ENCODE measurements at regions of chr15 and their contacts with region 1.

Region 1: GRCh38 chr15:41827880-41828806 is at the start of gene JMJD7:
- DNase-seq: peak; percentile 81 to 98 (median 91)
- ATAC-seq: peak; percentile 99
- H3K4me3 ChIP-seq: peak within 1 kb of the TSS; percentile 99
- H3K4me3 Mint-ChIP-seq: peak within 1 kb of the TSS; percentile 86 to 99 (median 96)
- H3K27ac ChIP-seq: peak within 1 kb of the TSS; percentile 94
- H3K27ac Mint-ChIP-seq: peak within 1 kb of the TSS; percentile 78 to 96 (median 92)
- H3K4me1 ChIP-seq: peaks cover 26 to 38% of the 10 kb centered on the region in 2 donors
- H3K4me1 Mint-ChIP-seq: peaks cover 34 to 53% (median 50%) of the 10 kb centered on the region in 7 donors
- H3K27me3 ChIP-seq: no peaks in the 10 kb centered on the region
- H3K27me3 Mint-ChIP-seq: peaks cover 0 to 3% (median 0%) of the 10 kb centered on the region in 5 donors
- total RNA-seq, gene JMJD7: 25.3 to 83.7 (median 52.1) TPM

Region 2: GRCh38 chr15:41401904-41402267 is 426.3 kb before region 1 on chr15:
- CTCF ChIA-PET with region 1: no interaction called
- POLR2A ChIA-PET with region 1: no interaction called
- intact Hi-C with region 1: loop called in 1 of 2 experiments (anchors 1 kb)
- DNase-seq: no peak
- ATAC-seq: no peak
- H3K4me3 ChIP-seq: peak overlapping the region; percentile 92
- H3K4me3 Mint-ChIP-seq: peak overlapping the region; percentile 87 to 97 (median 96)
- H3K27ac ChIP-seq: peak overlapping the region; percentile 81
- H3K27ac Mint-ChIP-seq: peak overlapping the region; percentile 89 to 96 (median 94)
- H3K4me1 ChIP-seq: peaks cover 0 to 14% of the 10 kb centered on the region in 2 donors
- H3K4me1 Mint-ChIP-seq: peaks cover 0 to 32% (median 24%) of the 10 kb centered on the region in 7 donors
- H3K27me3 ChIP-seq: no peaks in the 10 kb centered on the region
- H3K27me3 Mint-ChIP-seq: no peaks in the 10 kb centered on the region

Region 3: GRCh38 chr15:41870689-41871081 is 42.5 kb after region 1 on chr15:
- CTCF ChIA-PET with region 1: no interaction called
- POLR2A ChIA-PET with region 1: interaction called, 3 read pairs
- intact Hi-C with region 1: loop called in 1 of 2 experiments (anchors 2 kb)
- DNase-seq: peak in 8 of 9 donors; percentile 42 to 69 (median 60)
- ATAC-seq: peak; percentile 91
- H3K4me3 ChIP-seq: no peak overlapping the region
- H3K4me3 Mint-ChIP-seq: peak overlapping the region; percentile 13 to 81 (median 62)
- H3K27ac ChIP-seq: no peak overlapping the region
- H3K27ac Mint-ChIP-seq: peak overlapping the region; percentile 56 to 98 (median 94)
- H3K4me1 ChIP-seq: no peaks in the 10 kb centered on the region
- H3K4me1 Mint-ChIP-seq: peaks cover 7 to 11% (median 8%) of the 10 kb centered on the region in 7 donors
- H3K27me3 ChIP-seq: no peaks in the 10 kb centered on the region
- H3K27me3 Mint-ChIP-seq: no peaks in the 10 kb centered on the region

Region 4: DNA sequence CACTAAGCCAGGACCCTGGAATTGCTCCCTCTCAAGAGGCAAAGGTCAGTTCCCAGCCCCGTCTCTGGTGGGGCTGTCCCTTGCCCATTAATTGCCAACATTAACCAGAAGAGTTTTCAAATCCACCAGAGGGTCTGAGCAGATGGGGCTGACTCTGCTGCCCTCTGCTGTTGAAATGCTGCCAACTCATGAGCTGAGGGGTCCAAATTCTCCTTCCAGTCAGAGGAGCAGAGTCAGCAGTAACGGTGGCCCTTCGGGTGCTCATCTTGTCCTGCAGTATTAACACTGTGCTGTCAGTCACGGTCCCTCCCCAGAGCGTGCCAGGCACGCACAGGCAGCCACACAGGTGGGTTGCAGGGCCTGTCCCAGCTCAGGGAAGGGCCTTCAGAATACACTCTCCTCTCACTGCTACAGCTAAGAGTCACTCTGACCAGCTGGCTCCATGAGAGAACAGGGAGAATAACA is 76.4 kb after region 1 on chr15:
- CTCF ChIA-PET with region 1: interaction called, 5 read pairs
- POLR2A ChIA-PET with region 1: interaction called, 5 read pairs
- intact Hi-C with region 1: loop called (anchors 1 kb)
- DNase-seq: peak; percentile 54 to 76 (median 64)
- ATAC-seq: peak; percentile 89
- H3K4me3 ChIP-seq: no peak overlapping the region
- H3K4me3 Mint-ChIP-seq: no peak overlapping the region
- H3K27ac ChIP-seq: no peak overlapping the region
- H3K27ac Mint-ChIP-seq: peak overlapping the region; percentile 9 to 90 (median 62)
- H3K4me1 ChIP-seq: peaks cover 0 to 9% of the 10 kb centered on the region in 2 donors
- H3K4me1 Mint-ChIP-seq: peaks cover 2 to 14% (median 6%) of the 10 kb centered on the region in 7 donors
- H3K27me3 ChIP-seq: no peaks in the 10 kb centered on the region
- H3K27me3 Mint-ChIP-seq: no peaks in the 10 kb centered on the region

Region 5: GRCh38 chr15:41972253-41973242 is 144.4 kb after region 1 on chr15 and contains the start of gene EHD4:
- CTCF ChIA-PET with region 1: no interaction called
- POLR2A ChIA-PET with region 1: no interaction called
- intact Hi-C with region 1: loop called in 1 of 2 experiments (anchors 2 kb)
- DNase-seq: peak; percentile 85 to 96 (median 94)
- ATAC-seq: peak; percentile 91
- H3K4me3 ChIP-seq: peak within 1 kb of the TSS; percentile 87
- H3K4me3 Mint-ChIP-seq: peak within 1 kb of the TSS; percentile 85 to 97 (median 94)
- H3K27ac ChIP-seq: peak within 1 kb of the TSS; percentile 83
- H3K27ac Mint-ChIP-seq: peak within 1 kb of the TSS; percentile 90 to 97 (median 95)
- H3K4me1 ChIP-seq: peaks cover 19 to 23% of the 10 kb centered on the region in 2 donors
- H3K4me1 Mint-ChIP-seq: peaks cover 31 to 55% (median 45%) of the 10 kb centered on the region in 7 donors
- H3K27me3 ChIP-seq: no peaks in the 10 kb centered on the region
- H3K27me3 Mint-ChIP-seq: peaks cover 0 to 17% (median 7%) of the 10 kb centered on the region in 5 donors
- total RNA-seq, gene EHD4: 10.4 to 48.3 (median 23.7) TPM

Measured in naive thymus-derived CD4-positive, alpha-beta T cell (primary cell).